AG04450 (cell line): ENCODE measurements at regions of chr10 and their contacts with region 1.

Region 1: DNA sequence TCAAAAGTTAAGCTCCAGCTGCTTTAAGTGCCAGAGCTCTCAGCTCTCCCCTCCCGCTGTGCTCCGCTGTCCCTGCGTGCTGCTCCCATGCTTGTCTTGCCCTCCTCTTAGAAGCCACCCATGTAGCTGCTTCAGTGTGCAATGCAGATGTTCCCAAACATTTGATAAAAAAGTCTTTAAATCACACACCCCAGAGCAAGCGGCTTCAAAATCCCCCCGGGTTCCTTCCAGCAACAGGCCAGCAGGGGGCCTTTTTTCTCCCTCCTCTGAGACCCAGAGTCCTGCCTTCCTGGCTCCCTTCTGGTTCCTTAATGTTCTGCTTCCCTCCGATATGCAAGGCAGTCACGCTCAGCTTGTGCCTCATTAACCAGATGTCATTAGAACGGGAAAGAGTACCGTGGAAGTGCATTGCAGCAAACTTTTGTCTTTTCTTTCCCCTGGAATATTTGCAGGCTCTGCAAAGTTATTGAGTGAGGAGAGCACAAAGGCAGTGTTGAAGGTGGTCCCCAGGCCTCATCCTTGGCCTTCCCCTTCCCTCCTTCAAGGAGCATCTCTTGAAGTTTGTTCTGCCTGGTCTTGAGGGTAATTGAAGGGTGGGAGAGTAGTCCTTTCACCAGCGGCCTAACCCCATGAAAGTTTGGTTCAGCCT is 25.5 kb downstream of the LDB3 start:
- DNase-seq: no peak
- H3K4me3 ChIP-seq: no peak overlapping the region
- H3K27ac ChIP-seq: no peak overlapping the region
- H3K27me3 ChIP-seq: peaks cover 2% of the 10 kb centered on the region
- CTCF ChIP-seq: peak; percentile 84

Region 2: DNA sequence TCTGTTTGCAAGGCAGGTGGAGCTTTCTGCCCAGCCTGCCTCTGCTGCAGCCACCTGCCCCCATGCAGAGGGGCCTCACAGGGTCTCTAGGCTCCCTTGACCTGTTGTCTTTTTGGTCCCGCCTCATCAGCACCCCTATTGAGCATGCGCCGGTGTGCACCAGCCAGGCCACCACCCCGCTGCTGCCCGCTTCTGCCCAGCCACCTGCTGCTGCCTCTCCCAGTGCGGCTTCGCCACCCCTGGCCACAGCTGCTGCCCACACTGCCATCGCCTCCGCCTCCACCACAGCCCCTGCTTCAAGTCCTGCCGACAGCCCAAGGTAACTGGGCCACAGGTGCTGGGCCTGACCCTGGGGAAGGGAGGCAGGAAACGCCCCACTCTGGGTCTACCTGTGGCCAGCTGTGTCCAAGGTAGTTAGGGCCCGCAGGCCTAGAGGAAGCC is 12.6 kb after region 1 on chr10:
- CTCF ChIA-PET with region 1: interaction called, 11 read pairs
- POLR2A ChIA-PET with region 1: no interaction called
- DNase-seq: no peak
- H3K4me3 ChIP-seq: no peak overlapping the region
- H3K27ac ChIP-seq: no peak overlapping the region
- H3K27me3 ChIP-seq: no peaks in the 10 kb centered on the region
- CTCF ChIP-seq: no peak

Region 3: DNA sequence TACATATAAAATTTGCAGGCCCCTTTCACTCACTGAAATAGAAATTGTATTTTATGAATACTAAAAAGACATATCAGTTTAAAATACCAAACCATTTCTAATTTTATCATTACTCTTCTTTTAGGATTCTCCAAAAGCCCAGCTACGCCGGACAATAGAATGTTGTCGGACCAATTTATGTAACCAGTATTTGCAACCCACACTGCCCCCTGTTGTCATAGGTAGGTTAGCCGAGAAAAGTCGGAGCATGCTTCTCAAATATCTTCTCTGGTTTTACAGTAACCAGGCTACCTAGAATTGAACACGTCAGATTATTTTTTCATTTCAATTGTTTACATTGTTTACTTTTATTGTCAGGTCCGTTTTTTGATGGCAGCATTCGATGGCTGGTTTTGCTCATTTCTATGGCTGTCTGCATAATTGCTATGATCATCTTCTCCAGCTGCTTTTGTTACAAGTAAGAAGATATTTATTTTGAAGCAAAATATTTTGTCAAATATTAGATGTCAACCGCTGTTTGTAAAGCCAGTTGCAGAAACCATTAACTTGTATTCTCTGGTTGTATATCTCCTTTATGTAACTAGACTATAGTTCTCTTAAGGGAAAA is 205.9 kb after region 1 on chr10:
- CTCF ChIA-PET with region 1: interaction called, 72 read pairs
- POLR2A ChIA-PET with region 1: interaction called, 3 read pairs
- DNase-seq: no peak
- H3K4me3 ChIP-seq: no peak overlapping the region
- H3K27ac ChIP-seq: no peak overlapping the region
- H3K27me3 ChIP-seq: no peaks in the 10 kb centered on the region
- CTCF ChIP-seq: peak; percentile 82